H1 (cell line): ENCODE measurements at regions of chr16 and their contacts with region 1.

Region 1: DNA sequence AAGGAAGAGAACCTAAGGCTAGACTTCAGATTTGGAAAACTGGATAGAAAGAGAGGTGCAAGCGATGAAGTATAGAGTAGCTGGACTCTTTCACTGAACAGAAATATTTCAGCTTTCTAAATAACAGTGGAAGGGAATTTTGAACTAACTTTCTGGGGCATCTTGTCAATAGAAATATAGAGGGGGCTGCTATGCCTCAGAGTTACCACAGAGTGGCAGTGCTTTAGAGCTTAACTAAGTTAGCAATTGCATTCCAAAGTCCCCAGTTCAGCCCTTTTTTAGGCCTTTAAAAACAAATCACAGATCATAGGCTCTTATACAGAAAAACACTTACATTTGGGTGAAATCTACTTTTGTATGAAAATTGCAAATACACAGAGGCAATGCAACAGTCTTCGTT is 154.2 kb upstream of the CDH8 start:
- DNase-seq: no peak
- H3K4me3 ChIP-seq: no peak overlapping the region
- H3K27ac ChIP-seq: no peak overlapping the region
- H3K4me1 ChIP-seq: no peaks in the 10 kb centered on the region
- H3K27me3 ChIP-seq: no peaks in the 10 kb centered on the region
- CTCF ChIP-seq: peak in 2 of 3 experiments; percentile 74 to 76; a peak in 3 of 4 replicates
- EP300 ChIP-seq: no peak
- POLR2A ChIP-seq: no peak
- RAD21 ChIP-seq: peak; percentile 82

Region 2: DNA sequence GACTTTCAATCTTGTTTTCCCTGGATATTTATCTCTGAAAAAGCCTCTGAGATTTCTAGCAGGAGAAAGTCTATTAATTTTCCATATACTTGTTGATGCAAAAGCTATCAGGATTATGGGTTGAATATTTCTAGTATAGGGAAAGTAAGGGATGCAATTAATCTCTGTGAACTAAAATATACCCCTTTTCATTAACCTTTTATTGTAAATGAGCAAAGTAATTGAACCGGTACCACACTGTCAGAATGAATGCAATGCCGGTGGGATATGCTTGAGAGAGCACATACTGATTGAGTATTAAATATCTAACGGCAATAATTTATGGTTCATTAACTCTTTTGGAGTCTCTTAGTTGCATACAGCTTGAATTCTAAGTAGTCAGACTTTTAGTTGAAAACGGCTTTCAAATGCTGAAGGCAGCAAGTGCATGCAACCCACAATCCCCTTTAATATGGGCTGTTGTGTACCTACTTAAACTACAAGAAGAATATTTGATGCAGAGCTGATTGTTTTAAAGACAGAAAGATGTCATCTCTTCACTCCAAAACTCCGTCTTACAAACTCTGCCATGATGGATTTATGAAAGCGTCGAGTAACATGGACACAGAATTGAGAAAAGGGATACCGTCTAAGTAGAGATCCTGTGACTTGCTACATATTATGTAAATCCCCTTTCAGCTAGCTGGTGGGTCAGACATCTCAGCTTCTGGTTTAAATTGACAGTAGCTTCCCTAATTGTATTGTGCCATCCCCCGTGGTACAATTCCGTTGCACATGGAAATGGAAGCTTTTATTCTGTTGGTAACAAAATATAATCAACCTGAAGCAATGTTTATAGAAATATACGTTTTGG is 12.8 kb before region 1 on chr16:
- CTCF ChIA-PET with region 1: interaction called, 13 read pairs
- POLR2A ChIA-PET with region 1: no interaction called
- DNase-seq: no peak
- H3K4me3 ChIP-seq: no peak overlapping the region
- H3K27ac ChIP-seq: no peak overlapping the region
- H3K4me1 ChIP-seq: no peaks in the 10 kb centered on the region
- H3K27me3 ChIP-seq: no peaks in the 10 kb centered on the region
- CTCF ChIP-seq: no peak
- EP300 ChIP-seq: no peak
- POLR2A ChIP-seq: no peak
- RAD21 ChIP-seq: no peak

Region 3: DNA sequence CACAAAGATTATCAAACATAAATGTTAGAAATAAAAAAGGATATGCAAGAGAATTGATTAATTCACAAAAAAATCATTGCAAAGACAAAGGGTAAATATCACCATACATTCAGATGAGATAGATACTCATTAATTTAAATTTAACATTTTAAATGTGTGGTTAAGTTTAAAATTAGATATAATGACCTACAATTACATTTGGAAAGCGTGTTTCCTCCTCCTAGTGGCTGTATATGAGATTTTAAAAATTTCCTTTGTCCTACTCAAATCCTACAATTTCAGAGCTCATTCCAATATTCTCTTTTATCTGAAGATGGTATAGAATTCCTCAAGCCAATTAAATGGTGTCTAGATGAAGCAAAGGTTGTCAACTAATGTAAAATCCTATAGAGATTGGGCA is 15.0 kb after region 1 on chr16:
- CTCF ChIA-PET with region 1: interaction called, 71 read pairs
- POLR2A ChIA-PET with region 1: no interaction called
- DNase-seq: no peak
- H3K4me3 ChIP-seq: no peak overlapping the region
- H3K27ac ChIP-seq: no peak overlapping the region
- H3K4me1 ChIP-seq: no peaks in the 10 kb centered on the region
- H3K27me3 ChIP-seq: no peaks in the 10 kb centered on the region
- CTCF ChIP-seq: peak in 1 of 3 experiments; percentile 7; a peak in 1 of 4 replicates
- EP300 ChIP-seq: no peak
- POLR2A ChIP-seq: no peak
- RAD21 ChIP-seq: 0 out of 4 replicates have a peak, but pooled peaks of 1 of the 2 experiments have one; percentile 6

Region 4: DNA sequence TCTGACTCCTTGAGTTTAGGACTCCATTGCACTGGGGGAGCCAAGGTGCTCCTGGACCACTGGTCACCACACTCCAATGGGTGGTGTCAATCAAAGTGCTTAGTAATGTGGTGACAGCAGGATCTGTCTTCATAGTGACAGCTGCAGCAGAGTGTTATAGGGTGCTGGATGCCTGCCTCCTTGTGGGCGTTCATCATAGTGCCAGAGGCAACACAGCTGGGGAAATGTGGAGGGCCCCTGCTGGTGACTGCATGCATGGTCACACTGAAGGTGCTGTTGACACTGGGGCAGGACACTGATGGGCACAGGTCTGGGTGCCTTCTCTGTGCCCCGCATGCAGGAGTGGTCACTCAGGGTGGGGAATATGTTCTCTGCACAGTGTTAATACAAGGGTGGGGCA is 23.3 kb after region 1 on chr16:
- CTCF ChIA-PET with region 1: interaction called, 36 read pairs
- POLR2A ChIA-PET with region 1: no interaction called
- DNase-seq: peak; percentile 29 to 60
- H3K4me3 ChIP-seq: no peak overlapping the region
- H3K27ac ChIP-seq: no peak overlapping the region
- H3K4me1 ChIP-seq: no peaks in the 10 kb centered on the region
- H3K27me3 ChIP-seq: no peaks in the 10 kb centered on the region
- CTCF ChIP-seq: peak; percentile 98 to 99 (median 99)
- EP300 ChIP-seq: no peak
- POLR2A ChIP-seq: no peak
- RAD21 ChIP-seq: peak; percentile 64 to 74

Region 5: GRCh38 chr16:62225697-62226280 is 35.4 kb after region 1 on chr16:
- CTCF ChIA-PET with region 1: interaction called, 10 read pairs
- POLR2A ChIA-PET with region 1: no interaction called
- DNase-seq: peak; percentile 86 to 92
- H3K4me3 ChIP-seq: no peak overlapping the region
- H3K27ac ChIP-seq: no peak overlapping the region
- H3K4me1 ChIP-seq: no peaks in the 10 kb centered on the region
- H3K27me3 ChIP-seq: no peaks in the 10 kb centered on the region
- CTCF ChIP-seq: peak; percentile 60 to 85 (median 83)
- EP300 ChIP-seq: no peak
- POLR2A ChIP-seq: no peak
- RAD21 ChIP-seq: peak; percentile 70 to 74

Region 6: GRCh38 chr16:62256406-62256805 is 66.0 kb after region 1 on chr16:
- CTCF ChIA-PET with region 1: interaction called, 12 read pairs
- POLR2A ChIA-PET with region 1: no interaction called
- DNase-seq: no peak
- H3K4me3 ChIP-seq: no peak overlapping the region
- H3K27ac ChIP-seq: no peak overlapping the region
- H3K4me1 ChIP-seq: peaks cover 0 to 7% (median under 1%) of the 10 kb centered on the region in 4 experiments; a peak in 3 of 7 replicates
- H3K27me3 ChIP-seq: no peaks in the 10 kb centered on the region; a peak in 1 of 7 replicates
- CTCF ChIP-seq: peak in 2 of 3 experiments; percentile 45 to 46; a peak in 3 of 4 replicates
- EP300 ChIP-seq: no peak
- POLR2A ChIP-seq: no peak
- RAD21 ChIP-seq: peak; percentile 30 to 48

Region 7: DNA sequence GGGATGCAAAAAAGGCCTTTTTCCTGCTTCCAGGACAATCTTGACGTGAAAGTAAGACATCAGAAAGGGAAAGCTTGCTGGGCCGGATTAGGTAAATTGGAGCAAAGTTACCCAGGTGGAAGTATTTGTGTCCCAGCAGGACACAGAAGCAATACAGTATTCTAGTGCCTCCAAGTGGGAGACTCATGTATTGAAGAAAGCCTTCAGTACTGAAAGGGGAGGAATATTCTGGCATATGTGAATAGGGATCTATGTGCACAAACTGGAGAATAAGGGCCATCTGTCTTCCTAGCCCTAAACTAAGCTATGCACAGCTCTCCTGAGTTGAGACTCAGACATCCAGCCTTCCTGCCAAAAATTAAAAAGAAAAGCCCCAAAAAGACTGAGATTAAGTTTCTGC is 173.1 kb after region 1 on chr16:
- CTCF ChIA-PET with region 1: interaction called, 10 read pairs
- POLR2A ChIA-PET with region 1: no interaction called
- DNase-seq: peak in 1 of 2 experiments; percentile 7
- H3K4me3 ChIP-seq: no peak overlapping the region
- H3K27ac ChIP-seq: no peak overlapping the region
- H3K4me1 ChIP-seq: peaks cover 0 to 4% (median 0%) of the 10 kb centered on the region in 4 experiments; a peak in 1 of 7 replicates
- H3K27me3 ChIP-seq: no peaks in the 10 kb centered on the region
- CTCF ChIP-seq: peak in 2 of 3 experiments; percentile 70 to 73; a peak in 3 of 4 replicates
- EP300 ChIP-seq: no peak
- POLR2A ChIP-seq: no peak
- RAD21 ChIP-seq: peak; percentile 89 to 91

Region 8: DNA sequence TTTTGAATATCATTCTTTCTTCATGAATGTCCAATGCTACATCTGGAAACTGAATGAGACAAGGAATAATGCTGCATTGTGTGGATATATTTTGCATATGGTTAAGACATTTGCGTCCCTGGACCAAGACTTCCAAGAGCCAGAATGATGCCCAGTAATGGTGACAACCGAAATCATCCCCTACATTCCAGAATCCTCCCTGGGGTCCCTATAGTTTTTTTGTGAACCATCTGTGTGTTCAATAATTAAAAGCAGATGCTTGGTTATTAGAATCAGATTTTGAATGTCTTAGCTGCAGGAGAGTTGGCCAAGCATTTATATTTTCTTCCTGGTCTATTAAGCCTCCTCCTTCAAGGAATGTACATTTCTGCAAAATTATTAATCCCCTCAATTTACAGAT is 272.5 kb after region 1 on chr16:
- CTCF ChIA-PET with region 1: no interaction called
- POLR2A ChIA-PET with region 1: no interaction called
- DNase-seq: no peak
- H3K4me3 ChIP-seq: no peak overlapping the region
- H3K27ac ChIP-seq: no peak overlapping the region
- H3K4me1 ChIP-seq: no peaks in the 10 kb centered on the region
- H3K27me3 ChIP-seq: no peaks in the 10 kb centered on the region
- CTCF ChIP-seq: no peak
- EP300 ChIP-seq: no peak
- POLR2A ChIP-seq: no peak
- RAD21 ChIP-seq: no peak